GM10248 (cell line): ENCODE measurements at regions of chr2 and their contacts with region 1.

Region 1: GRCh38 chr2:180980106-180980942 is at the start of gene UBE2E3:
- DNase-seq: peak; percentile 81
- CTCF ChIP-seq: peak; percentile 78

Region 2: DNA sequence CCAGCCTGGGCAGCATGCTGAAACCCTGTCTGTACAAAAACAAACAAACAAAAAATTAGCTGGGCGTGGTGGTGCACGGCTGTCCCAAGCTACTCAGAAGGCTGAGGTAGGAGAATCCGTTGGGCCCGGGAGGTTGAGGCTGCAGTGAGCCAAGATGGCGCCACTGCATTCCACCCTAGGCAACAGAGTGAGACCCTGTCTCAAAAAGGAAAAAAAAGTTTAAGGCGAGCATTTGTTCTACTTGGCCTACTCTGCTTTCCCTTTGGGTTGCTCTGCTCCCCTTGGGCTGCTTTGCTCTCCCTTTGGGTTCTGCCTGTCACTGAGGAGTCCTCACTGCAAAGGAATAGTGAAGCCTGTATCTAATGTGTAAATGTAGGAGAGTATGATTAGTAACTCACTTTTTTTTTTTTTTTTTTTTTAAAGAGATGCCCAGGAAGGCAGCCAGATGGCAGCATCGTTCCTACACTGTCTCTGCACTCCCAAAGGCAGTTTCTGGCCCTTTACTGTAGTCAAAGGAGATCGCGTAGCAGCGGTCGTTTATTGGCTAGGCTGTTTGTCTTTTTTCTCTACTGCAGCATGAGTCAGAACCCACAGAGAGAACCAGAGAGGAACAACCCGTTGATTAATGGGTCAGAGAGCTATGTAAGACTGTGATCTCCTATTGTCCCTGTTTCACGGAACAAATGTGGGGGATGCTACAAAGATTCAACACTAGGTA is 854.9 kb before region 1 on chr2:
- CTCF ChIA-PET with region 1: interaction called, 11 read pairs
- POLR2A ChIA-PET with region 1: no interaction called
- DNase-seq: peak; percentile 28
- CTCF ChIP-seq: peak; percentile 53

Region 3: DNA sequence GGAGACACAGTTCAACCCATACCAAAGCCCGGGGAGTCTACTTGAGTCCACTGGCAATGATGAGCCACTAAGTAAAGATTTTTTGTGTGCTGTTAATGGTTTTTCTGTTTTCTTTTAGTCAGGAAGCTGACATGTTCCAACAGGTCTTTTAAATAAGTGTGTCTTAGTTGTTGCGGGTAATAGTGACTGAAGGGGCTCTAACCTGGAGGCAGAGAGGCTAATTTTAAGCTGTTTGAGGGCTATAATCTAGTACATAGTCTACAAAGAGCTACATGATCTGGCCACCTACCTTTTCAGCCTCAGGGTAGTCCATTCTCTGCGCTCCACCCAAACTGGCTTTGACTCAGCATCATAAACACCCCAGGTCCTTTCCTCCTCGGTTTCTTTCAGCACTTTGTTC is 17.5 kb before region 1 on chr2:
- CTCF ChIA-PET with region 1: interaction called, 32 read pairs
- POLR2A ChIA-PET with region 1: no interaction called
- DNase-seq: no peak
- CTCF ChIP-seq: no peak

Region 4: DNA sequence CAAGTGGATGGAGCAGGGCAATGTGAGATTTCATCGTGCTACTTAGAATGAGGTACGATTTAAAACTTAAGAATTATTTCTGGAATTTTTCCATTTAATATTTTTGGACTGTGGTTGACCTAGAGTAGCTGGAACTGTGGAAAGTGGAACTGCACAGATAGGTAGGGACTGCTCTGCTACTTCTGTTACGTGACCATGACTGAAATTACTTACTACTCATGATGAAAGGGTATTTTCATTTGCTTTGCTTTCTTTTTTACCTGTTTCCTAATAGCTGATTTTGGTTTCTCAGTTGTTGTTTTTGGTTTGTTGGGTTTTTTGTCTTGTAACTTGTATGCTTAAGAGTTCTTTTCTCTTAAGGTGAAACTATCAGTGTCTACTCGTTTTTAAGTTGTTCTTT is 11.5 kb after region 1 on chr2:
- CTCF ChIA-PET with region 1: interaction called, 53 read pairs
- POLR2A ChIA-PET with region 1: no interaction called
- DNase-seq: peak; percentile 11
- CTCF ChIP-seq: no peak

Region 5: DNA sequence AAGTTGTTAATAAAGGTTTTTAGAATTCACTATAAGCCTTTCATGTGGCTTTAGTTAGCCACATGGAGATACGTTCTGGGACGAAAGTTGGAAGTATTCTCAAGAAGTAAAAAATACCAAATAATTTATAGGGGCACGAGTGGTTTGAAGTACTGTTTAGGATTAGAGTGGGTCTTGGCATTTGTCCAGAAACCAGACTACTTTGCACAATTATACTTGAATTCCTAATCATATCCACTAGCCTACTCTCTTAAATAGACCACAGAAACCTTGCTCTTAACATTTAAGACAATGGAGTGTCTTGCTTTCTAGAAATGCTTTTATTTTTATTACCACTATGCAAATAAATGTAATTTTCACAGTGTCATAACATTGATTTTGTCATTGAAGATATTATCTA is 44.7 kb after region 1 on chr2:
- CTCF ChIA-PET with region 1: interaction called, 10 read pairs
- POLR2A ChIA-PET with region 1: no interaction called
- DNase-seq: no peak
- CTCF ChIP-seq: no peak